ENCODE measurements at regions of chr1 and their contacts with region 1.

Region 1: DNA sequence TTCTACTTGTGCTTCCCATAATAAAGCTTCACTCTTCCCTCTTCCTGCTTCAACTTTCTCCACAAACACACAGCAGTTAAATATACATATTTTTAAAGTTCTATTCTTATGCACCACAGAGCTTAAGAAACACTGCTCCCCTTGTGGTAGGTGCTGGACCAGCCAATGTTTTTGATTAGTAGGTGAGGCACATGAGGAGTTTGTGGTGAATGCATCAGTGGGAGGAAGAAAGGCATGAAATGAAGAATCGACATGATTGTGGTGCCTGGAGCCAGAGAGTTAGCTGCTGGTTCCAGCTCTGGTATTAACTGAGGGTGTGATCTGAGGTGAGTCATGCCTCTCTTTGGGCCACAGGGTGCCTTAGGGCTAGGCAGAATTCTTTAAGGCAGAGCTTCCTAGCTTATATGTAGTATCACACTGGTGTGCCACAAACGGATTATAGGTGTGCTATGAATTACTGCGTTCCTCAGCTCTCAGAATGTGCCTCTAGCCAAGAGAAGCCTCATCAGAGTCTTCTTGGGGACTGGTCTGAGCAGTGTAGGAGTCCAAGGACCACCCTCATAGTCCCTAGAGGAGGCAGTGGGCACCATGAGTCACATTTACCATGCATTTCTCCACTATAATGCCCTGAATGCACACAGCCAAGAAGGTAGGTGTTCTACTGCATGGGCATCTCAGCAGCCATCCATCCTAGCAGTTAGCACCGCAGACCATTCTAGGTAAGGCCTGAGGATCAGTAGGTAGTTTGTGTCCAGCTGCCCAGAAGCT is 97.4 kb upstream of the SGIP1 start:
- DNase-seq: peak; percentile 81
- ATAC-seq: peak; percentile 86
- H3K4me3 Mint-ChIP-seq: peak overlapping the region; percentile 37
- H3K27ac Mint-ChIP-seq: peak overlapping the region; percentile 73
- H3K4me1 Mint-ChIP-seq: peaks cover 39% of the 10 kb centered on the region
- H3K27me3 Mint-ChIP-seq: no peaks in the 10 kb centered on the region

Region 2: DNA sequence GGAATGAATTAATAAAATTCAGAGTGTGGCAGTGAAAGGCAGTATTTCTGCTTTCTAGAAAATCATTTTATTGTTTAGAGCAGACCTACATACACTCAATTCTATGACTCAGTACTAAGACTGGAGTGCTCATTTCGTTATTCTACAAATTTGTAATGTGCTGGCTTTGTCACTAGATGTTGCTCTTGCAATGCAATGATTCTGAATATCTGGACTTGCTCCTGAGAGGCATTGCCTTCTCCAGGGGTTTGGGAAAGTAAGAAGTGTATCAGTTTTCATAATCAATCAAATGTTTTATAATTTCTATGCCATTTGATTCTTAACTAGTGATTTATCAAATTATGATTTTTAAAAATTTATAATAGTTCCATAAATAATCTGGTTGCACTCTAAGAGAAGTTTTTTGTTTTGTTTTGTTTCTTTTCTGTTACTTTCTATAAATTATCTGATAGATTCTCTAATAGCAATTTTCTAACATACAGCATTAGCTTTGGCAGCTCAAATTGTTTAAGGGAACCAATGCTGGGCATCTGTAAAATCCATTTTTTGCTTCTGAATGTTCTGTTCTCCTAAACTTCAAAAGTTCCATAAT is 183.1 kb before region 1 on chr1:
- CTCF ChIA-PET with region 1: interaction called, 406 read pairs
- DNase-seq: no peak
- ATAC-seq: peak; percentile 87
- H3K4me3 Mint-ChIP-seq: no peak overlapping the region
- H3K27ac Mint-ChIP-seq: no peak overlapping the region
- H3K4me1 Mint-ChIP-seq: peaks cover 77% of the 10 kb centered on the region
- H3K27me3 Mint-ChIP-seq: no peaks in the 10 kb centered on the region

Region 3: DNA sequence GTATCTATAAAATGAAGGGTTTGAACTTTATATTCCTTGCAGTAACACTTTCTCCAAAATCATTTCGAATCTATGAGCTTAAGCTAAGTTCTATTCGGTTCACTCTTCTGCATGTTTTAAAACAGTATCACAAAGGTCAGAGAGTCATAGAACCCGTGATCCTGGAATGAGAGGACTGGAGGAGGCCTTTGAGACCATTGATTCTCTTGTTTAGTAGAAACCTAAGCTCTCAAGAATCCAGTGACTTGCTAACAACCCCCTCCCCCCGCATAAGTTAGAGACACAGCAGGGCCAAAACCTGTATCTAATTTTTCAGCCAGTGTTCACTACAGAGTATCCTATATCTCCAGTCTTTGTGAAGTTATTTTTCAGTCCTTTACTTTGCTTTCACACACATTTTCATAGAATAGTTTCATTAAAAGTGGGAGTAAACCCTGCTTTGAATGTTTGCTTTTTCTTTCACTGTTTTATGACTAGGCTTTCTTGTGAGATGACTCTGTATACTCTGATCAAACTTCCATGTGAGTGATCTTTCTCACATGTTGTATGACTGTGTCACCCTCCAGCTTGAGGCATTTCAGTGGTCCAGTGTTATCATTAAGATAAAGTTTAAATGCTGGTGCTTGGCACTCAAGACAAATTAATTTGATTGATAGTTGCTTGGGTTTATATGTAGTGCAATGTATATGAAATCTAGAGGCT is 178.0 kb before region 1 on chr1:
- CTCF ChIA-PET with region 1: interaction called, 406 read pairs
- DNase-seq: no peak
- ATAC-seq: peak; percentile 88
- H3K4me3 Mint-ChIP-seq: no peak overlapping the region
- H3K27ac Mint-ChIP-seq: peak overlapping the region; percentile 44
- H3K4me1 Mint-ChIP-seq: peaks cover 84% of the 10 kb centered on the region
- H3K27me3 Mint-ChIP-seq: no peaks in the 10 kb centered on the region

Region 4: GRCh38 chr1:66276218-66276617 is 160.3 kb before region 1 on chr1:
- CTCF ChIA-PET with region 1: interaction called, 13 read pairs
- DNase-seq: peak; percentile 77
- ATAC-seq: peak; percentile 81
- H3K4me3 Mint-ChIP-seq: peak overlapping the region; percentile 52
- H3K27ac Mint-ChIP-seq: peak overlapping the region; percentile 79
- H3K4me1 Mint-ChIP-seq: peaks cover 93% of the 10 kb centered on the region
- H3K27me3 Mint-ChIP-seq: no peaks in the 10 kb centered on the region

Region 5: DNA sequence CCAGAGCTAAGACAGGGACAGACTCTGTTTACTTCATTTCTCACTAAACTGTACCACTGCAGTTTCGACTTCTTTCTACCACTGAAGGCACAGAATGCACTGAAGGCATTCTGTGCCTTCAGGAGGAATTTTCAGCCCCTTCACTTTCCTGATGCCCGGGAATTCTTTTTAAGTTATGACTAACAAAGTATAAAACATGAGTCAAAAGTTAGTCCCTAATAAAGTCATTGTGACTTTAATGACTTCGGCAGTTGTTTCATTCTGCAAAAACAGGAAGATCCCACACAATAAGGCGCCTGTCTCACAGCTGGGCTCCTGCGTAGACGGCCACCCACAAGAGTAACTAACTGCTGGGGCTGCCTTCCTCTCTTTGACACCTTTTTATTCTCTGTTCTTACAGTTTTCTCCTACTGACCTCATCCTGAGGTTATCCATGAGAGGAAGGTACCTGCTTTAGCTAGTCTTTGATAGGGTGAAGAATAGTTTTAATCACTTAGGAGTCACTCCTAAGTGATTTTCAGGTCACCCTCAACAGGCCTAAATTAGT is 86.5 kb before region 1 on chr1:
- CTCF ChIA-PET with region 1: interaction called, 17 read pairs
- DNase-seq: peak; percentile 68
- ATAC-seq: peak; percentile 61
- H3K4me3 Mint-ChIP-seq: peak overlapping the region; percentile 76
- H3K27ac Mint-ChIP-seq: peak overlapping the region; percentile 91
- H3K4me1 Mint-ChIP-seq: peaks cover 94% of the 10 kb centered on the region
- H3K27me3 Mint-ChIP-seq: no peaks in the 10 kb centered on the region

Region 6: DNA sequence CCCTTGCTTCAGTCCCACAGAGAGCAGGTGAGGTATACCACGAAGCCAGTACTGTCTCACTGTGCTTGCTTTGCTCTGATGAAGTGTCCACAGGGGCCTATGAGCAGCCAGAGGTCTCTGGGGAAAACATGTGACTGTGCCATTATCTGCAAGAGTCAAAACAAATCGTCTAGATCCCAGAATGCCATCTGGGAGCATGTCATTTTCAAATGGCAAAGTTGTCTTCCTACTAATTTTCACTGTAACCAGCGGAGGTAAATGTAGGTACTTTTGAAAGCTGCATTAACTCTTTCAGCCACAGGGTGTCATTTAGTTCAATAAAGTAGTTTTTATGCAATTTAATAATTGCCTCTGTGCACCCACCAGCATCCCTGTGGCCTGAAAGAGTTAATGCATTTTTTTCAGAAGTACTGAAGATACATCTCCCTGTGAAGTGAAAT is 76.3 kb before region 1 on chr1:
- CTCF ChIA-PET with region 1: interaction called, 10 read pairs
- DNase-seq: no peak
- ATAC-seq: no peak
- H3K4me3 Mint-ChIP-seq: no peak overlapping the region
- H3K27ac Mint-ChIP-seq: peak overlapping the region; percentile 64
- H3K4me1 Mint-ChIP-seq: peaks cover 81% of the 10 kb centered on the region
- H3K27me3 Mint-ChIP-seq: no peaks in the 10 kb centered on the region

Region 7: DNA sequence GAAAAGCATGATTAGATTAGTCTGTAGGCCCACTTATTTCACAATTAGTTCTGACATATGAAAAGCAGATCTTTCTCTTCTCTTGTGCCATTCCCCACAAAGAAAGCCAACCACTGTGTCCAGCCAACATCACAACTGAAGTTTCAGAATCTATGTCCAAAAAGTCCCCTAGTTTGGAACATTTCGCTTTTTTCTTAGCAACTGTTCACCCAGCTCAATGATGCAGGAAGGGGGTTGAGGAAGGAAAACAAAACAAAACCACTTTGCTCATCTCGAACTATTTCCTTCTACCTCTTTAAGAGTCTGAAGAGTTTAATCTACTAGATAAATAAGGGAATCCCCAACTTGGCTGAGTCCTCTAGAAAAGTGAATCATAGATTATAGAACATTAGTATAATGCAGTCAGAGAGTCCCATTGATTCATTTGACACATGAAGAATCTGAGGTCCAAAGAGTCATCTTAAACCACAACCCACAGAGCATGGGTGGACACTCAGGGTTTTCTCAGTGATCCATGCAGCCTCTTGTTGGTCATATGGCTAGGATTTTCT is 61.9 kb before region 1 on chr1:
- CTCF ChIA-PET with region 1: interaction called, 23 read pairs
- DNase-seq: peak; percentile 55
- ATAC-seq: peak; percentile 65
- H3K4me3 Mint-ChIP-seq: peak overlapping the region; percentile 53
- H3K27ac Mint-ChIP-seq: peak overlapping the region; percentile 82
- H3K4me1 Mint-ChIP-seq: peaks cover 57% of the 10 kb centered on the region
- H3K27me3 Mint-ChIP-seq: no peaks in the 10 kb centered on the region

Region 8: DNA sequence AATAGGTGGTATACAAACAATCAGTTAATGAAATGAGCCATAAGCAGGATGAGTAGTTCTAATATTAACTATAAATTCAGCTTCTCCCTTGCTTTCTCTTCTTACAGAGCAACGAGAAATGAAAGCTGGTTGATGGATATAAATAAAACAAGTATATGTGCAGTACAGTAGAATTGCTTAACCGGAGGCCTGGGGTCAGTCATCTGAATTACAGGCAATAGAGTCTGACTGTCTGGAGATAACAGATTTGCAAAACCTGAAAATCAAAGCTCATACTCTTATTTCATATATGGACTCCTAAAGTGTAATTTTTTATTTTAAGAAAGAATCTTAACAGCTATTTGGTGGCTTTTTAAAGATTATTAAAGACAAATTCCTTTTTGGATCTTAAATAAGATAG is 54.3 kb after region 1 on chr1:
- CTCF ChIA-PET with region 1: no interaction called
- DNase-seq: no peak
- ATAC-seq: no peak
- H3K4me3 Mint-ChIP-seq: no peak overlapping the region
- H3K27ac Mint-ChIP-seq: no peak overlapping the region
- H3K4me1 Mint-ChIP-seq: no peaks in the 10 kb centered on the region
- H3K27me3 Mint-ChIP-seq: peaks cover 6% of the 10 kb centered on the region